Naive thymus-derived CD4-positive, alpha-beta T cell (primary cell): ENCODE measurements at regions of chr13 and their contacts with region 1.

Region 1: GRCh38 chr13:73742982-73743381 is 391.2 kb downstream of the KLF12 start:
- DNase-seq: no peak
- ATAC-seq: no peak
- H3K4me3 ChIP-seq: no peak overlapping the region
- H3K4me3 Mint-ChIP-seq: no peak overlapping the region
- H3K27ac ChIP-seq: no peak overlapping the region
- H3K27ac Mint-ChIP-seq: peak overlapping the region in 7 of 9 donors; percentile 41 to 88 (median 76)
- H3K4me1 ChIP-seq: peaks cover 3 to 24% of the 10 kb centered on the region in 2 donors
- H3K4me1 Mint-ChIP-seq: peaks cover 30 to 70% (median 61%) of the 10 kb centered on the region in 7 donors
- H3K27me3 ChIP-seq: no peaks in the 10 kb centered on the region
- H3K27me3 Mint-ChIP-seq: no peaks in the 10 kb centered on the region

Region 2: GRCh38 chr13:72050251-72050650 is 1692.7 kb before region 1 on chr13:
- CTCF ChIA-PET with region 1: no interaction called
- POLR2A ChIA-PET with region 1: no interaction called
- intact Hi-C with region 1: no loop called
- DNase-seq: no peak
- ATAC-seq: no peak
- H3K4me3 ChIP-seq: no peak overlapping the region
- H3K4me3 Mint-ChIP-seq: no peak overlapping the region
- H3K27ac ChIP-seq: no peak overlapping the region
- H3K27ac Mint-ChIP-seq: no peak overlapping the region
- H3K4me1 ChIP-seq: no peaks in the 10 kb centered on the region
- H3K4me1 Mint-ChIP-seq: no peaks in the 10 kb centered on the region
- H3K27me3 ChIP-seq: no peaks in the 10 kb centered on the region
- H3K27me3 Mint-ChIP-seq: no peaks in the 10 kb centered on the region

Region 3: GRCh38 chr13:73715114-73715910 is 27.7 kb before region 1 on chr13:
- CTCF ChIA-PET with region 1: no interaction called
- POLR2A ChIA-PET with region 1: interaction called, 4 read pairs
- intact Hi-C with region 1: loop called in 1 of 2 experiments (anchors 1 kb)
- DNase-seq: peak in 8 of 9 donors; percentile 53 to 85 (median 77)
- ATAC-seq: peak; percentile 90
- H3K4me3 ChIP-seq: peak overlapping the region; percentile 7
- H3K4me3 Mint-ChIP-seq: peak overlapping the region; percentile 72 to 86 (median 78)
- H3K27ac ChIP-seq: peak overlapping the region; percentile 67
- H3K27ac Mint-ChIP-seq: peak overlapping the region; percentile 87 to 99 (median 97)
- H3K4me1 ChIP-seq: peaks cover 34 to 43% of the 10 kb centered on the region in 2 donors
- H3K4me1 Mint-ChIP-seq: peaks cover 25 to 80% (median 58%) of the 10 kb centered on the region in 7 donors
- H3K27me3 ChIP-seq: no peaks in the 10 kb centered on the region
- H3K27me3 Mint-ChIP-seq: no peaks in the 10 kb centered on the region

Region 4: DNA sequence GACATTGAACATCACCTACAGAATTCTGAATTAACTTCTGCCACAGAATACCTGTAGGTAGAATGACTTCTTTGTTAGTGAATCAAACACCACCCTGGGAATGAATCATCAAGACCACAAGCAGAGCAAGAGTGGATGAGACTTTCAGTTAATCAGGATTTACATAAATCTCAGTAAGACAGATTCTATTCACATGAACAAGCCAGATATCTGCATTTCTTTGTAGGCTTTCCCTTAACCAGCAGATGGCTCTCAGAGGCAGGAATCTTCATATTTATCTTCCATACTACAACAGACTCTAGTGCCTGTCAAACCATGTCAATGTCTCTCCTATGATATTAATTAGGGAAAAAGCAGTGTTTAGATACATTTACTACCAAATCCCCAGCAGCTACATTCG is 20.9 kb before region 1 on chr13:
- CTCF ChIA-PET with region 1: no interaction called
- POLR2A ChIA-PET with region 1: interaction called, 3 read pairs
- intact Hi-C with region 1: loop called in 1 of 2 experiments (anchors 2 kb)
- DNase-seq: peak in 3 of 9 donors; percentile 17 to 23 (median 23)
- ATAC-seq: peak; percentile 44
- H3K4me3 ChIP-seq: no peak overlapping the region
- H3K4me3 Mint-ChIP-seq: no peak overlapping the region
- H3K27ac ChIP-seq: no peak overlapping the region
- H3K27ac Mint-ChIP-seq: peak overlapping the region in 8 of 9 donors; percentile 14 to 92 (median 82)
- H3K4me1 ChIP-seq: peaks cover 6 to 7% of the 10 kb centered on the region in 2 donors
- H3K4me1 Mint-ChIP-seq: peaks cover 8 to 55% (median 50%) of the 10 kb centered on the region in 7 donors
- H3K27me3 ChIP-seq: no peaks in the 10 kb centered on the region
- H3K27me3 Mint-ChIP-seq: peaks cover 0 to 7% (median 0%) of the 10 kb centered on the region in 5 donors